Esophagus squamous epithelium (tissue), 5 donors: ENCODE measurements at regions of chr11 and their contacts with region 1.

Region 1: DNA sequence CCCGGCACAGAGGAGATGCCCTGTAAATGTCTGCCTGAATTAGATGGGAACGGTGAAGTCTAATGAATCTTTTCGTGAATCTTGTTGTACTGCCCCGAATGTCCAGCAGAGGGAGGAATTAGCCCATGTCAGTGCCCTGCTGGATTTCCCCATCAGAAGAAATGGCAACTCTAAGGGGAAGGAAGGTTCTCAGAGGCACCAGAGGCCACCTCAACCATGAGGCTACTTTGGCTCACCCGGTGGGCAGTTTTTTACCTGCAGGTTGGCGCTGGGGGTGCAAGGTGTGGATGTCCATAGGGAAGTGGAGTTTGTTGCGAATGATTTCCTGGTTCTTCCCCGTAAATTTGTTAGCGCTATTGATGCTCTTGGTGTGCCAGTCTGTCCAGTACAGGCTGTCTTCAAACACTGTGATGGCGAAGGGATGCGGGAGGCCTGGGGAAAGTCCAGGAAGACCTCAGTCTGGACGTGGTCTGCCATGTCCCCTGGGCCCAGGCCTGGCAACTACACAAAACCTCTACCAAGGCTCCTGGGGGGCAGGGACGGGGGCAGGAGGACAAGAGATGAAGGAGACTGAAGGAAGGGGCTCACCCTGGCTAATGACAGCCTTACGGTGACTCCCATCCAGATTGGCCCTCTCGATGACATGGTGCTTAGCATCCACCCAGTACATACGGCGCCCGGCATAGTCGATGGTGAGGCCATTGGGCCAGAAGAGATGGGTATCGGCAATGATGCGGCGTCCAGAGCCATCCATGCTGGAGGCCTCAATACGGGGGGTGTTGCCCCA is 28.5 kb downstream of the LRP4 start:
- DNase-seq: no peak
- H3K4me3 ChIP-seq: no peak overlapping the region
- H3K27ac ChIP-seq: no peak overlapping the region
- H3K4me1 ChIP-seq: peaks cover 0 to 14% (median 0%) of the 10 kb centered on the region in 3 donors
- H3K27me3 ChIP-seq: no peaks in the 10 kb centered on the region
- CTCF ChIP-seq: peak; percentile 65 to 95 (median 90)
- POLR2A ChIP-seq: no peak

Region 2: DNA sequence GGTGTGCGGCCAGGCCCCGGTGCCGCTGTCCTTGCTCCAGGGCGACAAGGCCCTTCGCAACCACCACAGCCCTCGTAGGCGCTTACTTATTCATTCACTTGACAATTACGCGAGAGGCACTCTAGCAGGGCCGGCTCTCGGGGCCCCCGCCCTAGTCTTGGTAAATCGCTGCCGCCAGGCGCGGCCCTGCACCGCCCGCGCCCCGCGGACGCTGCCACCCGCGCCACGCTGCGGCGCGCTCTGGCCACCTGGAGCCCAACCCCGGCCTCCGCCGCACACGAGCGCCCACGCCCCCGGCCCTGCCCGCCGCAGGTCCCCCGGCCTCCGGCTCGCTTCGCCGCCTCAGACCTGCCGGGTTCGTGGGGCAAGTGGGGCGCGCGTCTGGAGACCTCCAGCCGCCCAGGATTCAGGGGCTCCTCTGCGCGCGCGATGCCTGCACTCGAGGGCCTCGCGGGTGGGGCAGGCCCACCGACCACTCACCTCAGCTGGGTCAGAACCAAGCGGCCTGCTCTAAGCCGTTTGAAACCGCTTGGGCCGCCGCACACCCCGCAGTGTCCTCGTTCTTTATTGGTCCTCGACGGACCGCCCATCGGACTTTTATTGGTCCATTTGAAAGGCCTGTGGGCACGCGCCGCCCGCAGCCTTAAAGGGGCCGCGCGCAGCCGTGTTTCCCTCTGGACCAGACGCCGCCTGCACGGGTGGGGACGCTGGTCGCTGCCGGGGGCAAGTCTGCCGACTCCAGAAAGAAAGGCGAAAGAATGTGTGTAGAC is 44.0 kb before region 1 on chr11 and contains the start of gene CKAP5:
- intact Hi-C with region 1: no loop called
- DNase-seq: peak; percentile 65
- H3K4me3 ChIP-seq: peak within 1 kb of the TSS; percentile 89 to 99 (median 97)
- H3K27ac ChIP-seq: peak within 1 kb of the TSS; percentile 89 to 96 (median 93)
- H3K4me1 ChIP-seq: peaks cover 8 to 34% (median 14%) of the 10 kb centered on the region in 3 donors
- H3K27me3 ChIP-seq: no peaks in the 10 kb centered on the region
- CTCF ChIP-seq: peak in 2 of 6 experiments; percentile 32 to 36
- POLR2A ChIP-seq: peak in 2 of 4 donors; percentile 29 to 80
- total RNA-seq, gene CKAP5: 18.2 to 36.9 (median 29.7) TPM

Region 3: GRCh38 chr11:47152953-47153950 is 263.4 kb after region 1 on chr11:
- intact Hi-C with region 1: loop called (anchors 5 kb)
- DNase-seq: no peak
- H3K4me3 ChIP-seq: no peak overlapping the region
- H3K27ac ChIP-seq: peak overlapping the region in 2 of 4 donors; percentile 4 to 6
- H3K4me1 ChIP-seq: peaks cover 8 to 62% (median 22%) of the 10 kb centered on the region in 3 donors
- H3K27me3 ChIP-seq: no peaks in the 10 kb centered on the region
- CTCF ChIP-seq: peak; percentile 70 to 97 (median 96)
- POLR2A ChIP-seq: no peak

Region 4: GRCh38 chr11:47241841-47242301 is 352.0 kb after region 1 on chr11:
- intact Hi-C with region 1: no loop called
- DNase-seq: no peak
- H3K4me3 ChIP-seq: no peak overlapping the region
- H3K27ac ChIP-seq: peak overlapping the region in 1 of 4 donors; percentile 36
- H3K4me1 ChIP-seq: peaks cover 5 to 28% (median 6%) of the 10 kb centered on the region in 3 donors
- H3K27me3 ChIP-seq: no peaks in the 10 kb centered on the region
- CTCF ChIP-seq: no peak
- POLR2A ChIP-seq: no peak

Region 5: GRCh38 chr11:47348859-47349258 is 459.0 kb after region 1 on chr11:
- intact Hi-C with region 1: loop called (anchors 10 kb)
- DNase-seq: no peak
- H3K4me3 ChIP-seq: no peak overlapping the region
- H3K27ac ChIP-seq: no peak overlapping the region
- H3K4me1 ChIP-seq: no peaks in the 10 kb centered on the region
- H3K27me3 ChIP-seq: peaks cover 0 to 7% (median 0%) of the 10 kb centered on the region in 4 donors
- CTCF ChIP-seq: peak in 1 of 6 experiments; percentile 14
- POLR2A ChIP-seq: no peak